GM10248 (cell line): ENCODE measurements at regions of chr11 and their contacts with region 1.

Region 1: GRCh38 chr11:72430741-72431570 is 3.4 kb downstream of the CLPB start:
- DNase-seq: peak; percentile 72
- CTCF ChIP-seq: peak; percentile 74

Region 2: DNA sequence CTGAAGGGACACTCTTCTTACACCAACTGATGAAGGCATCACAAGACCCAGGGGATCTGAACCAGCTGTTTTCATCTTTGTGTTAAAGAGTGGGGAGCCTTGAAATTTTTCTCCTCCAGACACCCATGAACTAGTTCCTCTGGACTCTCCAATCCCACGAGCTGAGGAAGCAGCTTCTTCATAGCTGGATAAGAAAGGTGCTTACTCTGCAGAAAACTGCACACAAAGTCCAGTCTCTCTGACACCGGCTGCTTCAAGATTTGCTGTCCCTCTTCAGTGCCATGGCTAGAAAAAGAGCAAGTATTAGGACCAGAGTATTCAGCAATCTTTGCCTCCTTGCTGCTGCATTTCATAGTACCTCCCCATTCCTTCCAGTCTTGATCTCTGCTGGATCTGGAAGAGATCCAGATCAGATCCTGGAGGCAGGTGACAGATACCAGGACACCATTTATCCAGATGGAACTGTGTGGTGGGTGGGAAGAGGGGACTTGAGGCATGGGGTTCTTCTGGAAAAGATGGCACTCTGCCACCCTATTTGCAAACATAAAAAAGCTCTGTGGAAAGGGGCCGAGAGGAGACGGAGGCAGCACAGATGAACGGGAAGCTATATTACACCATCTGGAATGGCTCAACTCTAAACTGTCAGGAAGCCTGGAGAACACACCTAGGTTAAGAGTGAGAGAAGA is 406.7 kb before region 1 on chr11:
- CTCF ChIA-PET with region 1: interaction called, 16 read pairs
- POLR2A ChIA-PET with region 1: interaction called, 3 read pairs
- DNase-seq: no peak
- CTCF ChIP-seq: no peak

Region 3: DNA sequence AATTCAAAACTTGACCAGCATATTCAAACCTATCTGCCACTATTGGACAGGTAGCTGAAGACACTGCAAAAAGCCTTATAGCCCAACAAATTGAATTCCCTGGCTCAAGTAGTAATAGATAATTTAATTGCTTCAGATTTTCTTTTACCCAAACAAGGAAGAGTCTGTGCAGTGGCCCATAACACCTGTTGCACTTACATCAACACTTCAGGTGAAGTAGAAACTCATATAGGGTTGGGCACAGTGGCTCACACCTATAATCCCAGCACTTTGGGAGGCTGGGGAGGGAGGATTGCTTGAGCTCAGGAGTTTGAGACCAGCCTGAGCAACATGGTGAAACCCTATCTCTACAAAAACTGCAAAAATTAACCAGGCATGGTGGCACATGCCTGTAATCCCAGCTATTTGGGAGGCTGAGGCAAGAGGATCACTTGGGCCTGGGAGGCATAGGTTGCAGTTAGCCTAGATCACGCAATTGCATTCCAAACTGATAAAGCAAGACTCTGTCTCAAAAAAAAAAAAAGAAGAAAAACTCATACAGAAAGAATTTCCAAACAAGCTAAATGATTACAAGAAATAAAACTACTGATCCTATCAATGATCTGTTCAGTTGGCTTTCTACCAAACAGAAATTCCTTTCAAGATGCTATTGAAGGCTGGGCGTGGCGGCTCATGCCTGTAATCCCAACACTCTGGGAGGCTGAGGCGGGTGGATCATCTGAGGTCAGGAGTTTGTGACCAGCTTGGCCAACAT is 286.0 kb before region 1 on chr11:
- CTCF ChIA-PET with region 1: interaction called, 25 read pairs
- POLR2A ChIA-PET with region 1: no interaction called
- DNase-seq: no peak
- CTCF ChIP-seq: no peak

Region 4: DNA sequence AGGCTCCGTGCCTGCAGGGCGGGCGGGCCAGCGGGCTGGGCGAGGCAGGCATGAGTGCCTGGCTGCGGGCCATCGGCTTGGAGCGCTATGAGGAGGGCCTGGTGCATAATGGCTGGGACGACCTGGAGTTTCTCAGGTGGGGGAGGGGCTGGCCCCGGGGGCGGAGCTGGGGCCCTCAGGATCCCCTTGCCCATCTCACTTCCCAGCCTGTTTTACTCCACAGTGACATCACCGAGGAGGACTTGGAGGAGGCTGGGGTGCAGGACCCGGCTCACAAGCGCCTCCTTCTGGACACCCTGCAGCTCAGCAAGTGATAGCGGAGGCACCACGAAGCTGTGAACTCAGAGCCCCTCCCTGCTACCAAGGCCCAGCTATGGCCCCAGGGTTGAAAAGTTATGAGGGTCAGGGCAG is 192.9 kb before region 1 on chr11:
- CTCF ChIA-PET with region 1: interaction called, 11 read pairs
- POLR2A ChIA-PET with region 1: interaction called, 3 read pairs
- DNase-seq: peak; percentile 85
- CTCF ChIP-seq: peak; percentile 79

Region 5: GRCh38 chr11:72352859-72353551 is 78.0 kb before region 1 on chr11:
- CTCF ChIA-PET with region 1: interaction called, 14 read pairs
- POLR2A ChIA-PET with region 1: no interaction called
- DNase-seq: peak; percentile 45
- CTCF ChIP-seq: peak; percentile 36

Region 6: GRCh38 chr11:72446902-72447769 is 16.2 kb after region 1 on chr11:
- CTCF ChIA-PET with region 1: interaction called, 20 read pairs
- POLR2A ChIA-PET with region 1: no interaction called
- DNase-seq: peak; percentile 60
- CTCF ChIP-seq: peak; percentile 69